GM18951 (cell line): ENCODE measurements at regions of chr5 and their contacts with region 1.

Region 1: GRCh38 chr5:175729829-175730277 is 72.0 kb downstream of the HRH2 start:
- POLR2A ChIP-seq: no peak

Region 2: GRCh38 chr5:176152191-176152929 is 422.5 kb after region 1 on chr5:
- in situ Hi-C with region 1: no loop called
- POLR2A ChIP-seq: no peak

Region 3: GRCh38 chr5:176415952-176416924 is 686.4 kb after region 1 on chr5 and contains the start of gene CLTB:
- in situ Hi-C with region 1: loop called (anchors 25 kb)
- POLR2A ChIP-seq: peak; percentile 79